Lower leg skin (tissue), 4 donors: ENCODE measurements at regions of chr15 and their contacts with region 1.

Region 1: GRCh38 chr15:71651750-71652186 is 158.6 kb upstream of the NR2E3 start:
- DNase-seq: peak in 1 of 2 donors; percentile 48
- H3K4me3 ChIP-seq: no peak overlapping the region
- CTCF ChIP-seq: no peak
- POLR2A ChIP-seq: no peak

Region 2: DNA sequence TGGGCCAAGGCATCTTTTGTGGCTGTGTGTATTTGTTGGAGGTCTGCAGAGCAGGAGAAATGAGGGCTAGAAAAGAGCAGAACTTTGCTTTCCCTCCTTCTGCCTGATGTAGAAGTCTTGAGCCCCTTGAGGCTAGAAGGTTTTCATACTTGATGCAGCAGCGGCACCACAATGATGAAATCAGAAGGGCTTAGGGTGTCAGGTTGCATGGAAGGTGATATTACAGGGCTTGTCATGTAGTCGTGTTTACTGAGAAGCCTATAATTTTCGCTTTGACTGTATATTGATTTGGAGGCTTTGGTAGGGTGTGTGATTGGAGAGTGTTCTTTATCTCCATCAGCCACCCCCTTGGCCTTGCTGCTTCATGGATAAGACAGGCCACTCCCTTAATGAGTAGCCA is 196.7 kb before region 1 on chr15:
- intact Hi-C with region 1: loop called (anchors 10 kb)
- DNase-seq: no peak
- H3K4me3 ChIP-seq: no peak overlapping the region
- CTCF ChIP-seq: no peak
- POLR2A ChIP-seq: no peak